AG04450 (cell line): ENCODE measurements at regions of chr9 and their contacts with region 1.

Region 1: DNA sequence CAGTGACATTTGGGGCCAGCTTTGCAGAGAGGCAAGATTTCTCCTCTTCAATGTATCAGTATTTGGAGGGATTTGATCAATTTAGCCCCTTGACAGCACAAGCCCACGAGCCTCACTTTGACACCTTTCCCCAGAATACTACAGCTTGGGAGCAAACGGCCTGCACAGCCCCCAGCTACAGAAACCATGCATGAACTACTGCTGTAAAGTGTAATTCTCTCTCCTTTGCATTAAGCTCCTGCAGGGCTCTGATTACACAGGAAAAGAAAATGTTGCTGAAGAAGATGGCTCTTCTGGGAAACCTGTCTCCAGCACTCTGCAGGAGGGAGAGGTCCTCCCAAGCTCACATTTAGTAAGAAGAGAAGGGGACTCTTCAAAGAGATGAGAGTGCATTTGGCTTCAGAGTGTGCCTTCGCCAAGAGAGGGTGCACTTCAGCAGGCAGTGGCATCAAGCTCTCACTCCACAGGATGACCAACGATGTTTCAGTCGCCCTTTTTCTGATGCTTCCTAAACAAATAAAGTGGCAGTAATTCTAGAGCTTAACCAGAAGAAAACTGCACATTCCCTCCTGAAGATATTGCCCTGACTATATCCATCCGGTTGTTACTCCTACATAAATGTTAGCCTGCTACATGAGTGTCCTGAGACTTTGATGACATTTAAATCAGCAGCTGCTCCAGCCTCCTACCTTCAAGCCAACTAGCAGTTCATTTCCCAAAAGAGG is 272.2 kb downstream of the AUH start:
- DNase-seq: no peak
- H3K4me3 ChIP-seq: no peak overlapping the region
- H3K27ac ChIP-seq: no peak overlapping the region
- H3K27me3 ChIP-seq: no peaks in the 10 kb centered on the region
- CTCF ChIP-seq: peak; percentile 49

Region 2: GRCh38 chr9:91071185-91071990 is 18.2 kb before region 1 on chr9:
- CTCF ChIA-PET with region 1: no interaction called
- POLR2A ChIA-PET with region 1: no interaction called
- DNase-seq: peak; percentile 92
- H3K4me3 ChIP-seq: no peak overlapping the region
- H3K27ac ChIP-seq: peak overlapping the region; percentile 90
- H3K27me3 ChIP-seq: no peaks in the 10 kb centered on the region
- CTCF ChIP-seq: no peak

Region 3: DNA sequence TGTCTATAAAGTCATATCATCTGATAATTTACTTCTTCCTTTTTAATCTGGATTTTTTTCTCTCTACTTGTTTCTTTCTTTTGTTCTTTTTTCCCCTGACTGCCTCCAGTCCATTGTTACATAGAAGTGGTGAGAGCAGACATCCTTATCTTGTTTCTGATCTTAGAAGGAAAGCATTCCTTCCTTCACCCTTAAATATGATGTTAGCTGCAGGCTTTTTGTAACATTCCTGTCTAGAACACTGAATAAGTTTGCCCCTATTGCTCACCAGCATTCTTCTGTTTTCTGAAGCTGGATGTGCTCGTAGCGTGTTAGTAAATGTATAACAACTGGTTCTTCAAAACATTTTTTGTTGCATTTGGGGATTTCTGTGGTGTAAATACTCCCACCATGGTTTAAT is 470.7 kb after region 1 on chr9:
- CTCF ChIA-PET with region 1: no interaction called
- POLR2A ChIA-PET with region 1: interaction called, 11 read pairs
- DNase-seq: no peak
- H3K4me3 ChIP-seq: no peak overlapping the region
- H3K27ac ChIP-seq: no peak overlapping the region
- H3K27me3 ChIP-seq: no peaks in the 10 kb centered on the region
- CTCF ChIP-seq: no peak

Region 4: DNA sequence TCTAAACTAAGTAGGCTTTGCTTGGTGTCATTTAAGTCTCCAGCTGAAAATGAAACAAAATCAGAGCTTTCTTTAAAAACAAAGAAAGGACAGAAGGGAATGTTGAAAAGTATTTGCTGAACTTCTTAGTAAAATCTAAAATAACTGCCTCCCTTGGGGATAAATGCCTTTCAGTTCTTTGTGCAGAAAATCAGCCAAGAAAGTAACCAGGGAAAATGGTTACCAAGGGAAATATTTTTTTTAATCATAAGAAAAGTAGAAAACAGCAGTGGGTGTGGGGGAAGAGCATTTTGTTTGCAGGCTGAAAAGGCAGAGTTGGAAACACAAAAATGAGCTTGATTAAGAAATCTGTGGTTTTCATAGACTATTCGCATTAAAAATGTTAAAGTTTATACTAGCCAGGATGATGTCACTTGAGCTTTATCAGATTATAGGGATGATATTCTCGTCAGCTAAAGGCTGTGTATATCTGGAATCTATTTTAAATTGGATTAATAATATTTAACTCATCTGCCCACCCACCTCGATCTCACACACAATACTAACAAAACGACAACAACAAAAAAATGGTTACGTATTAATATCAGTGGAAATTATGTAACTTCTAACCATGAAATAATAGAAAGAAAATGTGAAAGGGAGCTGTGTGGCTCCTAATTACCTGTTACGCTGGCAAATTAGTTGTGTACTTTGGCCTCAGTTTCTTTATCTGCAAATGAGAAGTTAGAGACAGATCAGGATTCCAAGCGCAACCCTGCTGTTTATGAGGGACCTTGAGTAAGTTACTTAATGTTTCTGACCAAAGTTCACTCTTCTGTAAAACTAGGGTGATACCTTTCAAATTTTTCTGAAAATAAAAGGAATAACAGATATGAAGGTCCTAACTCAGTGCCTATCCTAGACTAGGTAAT is 1446.6 kb after region 1 on chr9 and contains the start of gene ECM2:
- CTCF ChIA-PET with region 1: no interaction called
- POLR2A ChIA-PET with region 1: no interaction called
- DNase-seq: no peak
- H3K4me3 ChIP-seq: peak within 1 kb of the TSS; percentile 46
- H3K27ac ChIP-seq: no peak within 1 kb of the TSS
- H3K27me3 ChIP-seq: no peaks in the 10 kb centered on the region
- CTCF ChIP-seq: no peak
- polyA plus RNA-seq, gene ECM2: 1.6 and 2.2 TPM in 2 replicates